Mammary epithelial cell (primary cell): ENCODE measurements at regions of chr20 and their contacts with region 1.

Region 1: GRCh38 chr20:25987073-25987927 is 290.6 kb upstream of the ZNF337 start:
- DNase-seq: peak; percentile 39
- H3K4me3 ChIP-seq: no peak overlapping the region
- H3K27ac ChIP-seq: no peak overlapping the region
- H3K4me1 ChIP-seq: no peaks in the 10 kb centered on the region
- H3K27me3 ChIP-seq: no peaks in the 10 kb centered on the region
- CTCF ChIP-seq: no peak

Region 2: DNA sequence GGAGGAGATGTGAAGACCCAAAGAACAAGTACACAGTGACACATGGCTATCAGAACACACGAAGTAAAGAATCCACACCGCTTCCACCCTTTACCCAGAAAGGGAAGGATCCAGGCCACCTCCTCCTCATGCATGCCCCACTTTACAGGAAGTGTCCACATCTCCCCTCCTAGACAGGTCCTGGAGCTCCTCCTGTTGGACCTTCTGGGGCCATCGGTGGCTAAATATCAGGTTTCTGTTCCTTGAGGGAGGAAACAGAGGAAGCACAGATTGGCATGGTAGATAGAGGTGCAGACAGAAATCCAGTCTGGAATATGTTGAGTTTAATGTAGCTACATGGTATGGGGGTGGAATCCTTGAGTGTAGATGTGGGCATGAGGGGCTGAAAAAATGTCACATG is 412.9 kb before region 1 on chr20:
- CTCF ChIA-PET with region 1: no interaction called
- dilution Hi-C with region 1: no loop called
- in situ Hi-C with region 1: no loop called
- intact Hi-C with region 1: no loop called
- DNase-seq: no peak
- H3K4me3 ChIP-seq: no peak overlapping the region
- H3K27ac ChIP-seq: no peak overlapping the region
- H3K4me1 ChIP-seq: no peaks in the 10 kb centered on the region
- H3K27me3 ChIP-seq: no peaks in the 10 kb centered on the region
- CTCF ChIP-seq: peak in 1 of 2 donors; percentile 17

Region 3: GRCh38 chr20:25632940-25633790 is 354.1 kb before region 1 on chr20:
- CTCF ChIA-PET with region 1: no interaction called
- dilution Hi-C with region 1: no loop called
- in situ Hi-C with region 1: no loop called
- intact Hi-C with region 1: no loop called
- DNase-seq: peak; percentile 82
- H3K4me3 ChIP-seq: no peak overlapping the region
- H3K27ac ChIP-seq: peak overlapping the region; percentile 18
- H3K4me1 ChIP-seq: peaks cover 12% of the 10 kb centered on the region
- H3K27me3 ChIP-seq: no peaks in the 10 kb centered on the region
- CTCF ChIP-seq: no peak

Region 4: GRCh38 chr20:26135325-26136110 is 148.2 kb after region 1 on chr20:
- CTCF ChIA-PET with region 1: no interaction called
- dilution Hi-C with region 1: no loop called
- in situ Hi-C with region 1: loop called in 1 of 2 experiments (anchors 25 kb)
- intact Hi-C with region 1: no loop called
- DNase-seq: no peak
- H3K4me3 ChIP-seq: no peak overlapping the region
- H3K27ac ChIP-seq: no peak overlapping the region
- H3K4me1 ChIP-seq: no peaks in the 10 kb centered on the region
- H3K27me3 ChIP-seq: no peaks in the 10 kb centered on the region
- CTCF ChIP-seq: no peak

Region 5: DNA sequence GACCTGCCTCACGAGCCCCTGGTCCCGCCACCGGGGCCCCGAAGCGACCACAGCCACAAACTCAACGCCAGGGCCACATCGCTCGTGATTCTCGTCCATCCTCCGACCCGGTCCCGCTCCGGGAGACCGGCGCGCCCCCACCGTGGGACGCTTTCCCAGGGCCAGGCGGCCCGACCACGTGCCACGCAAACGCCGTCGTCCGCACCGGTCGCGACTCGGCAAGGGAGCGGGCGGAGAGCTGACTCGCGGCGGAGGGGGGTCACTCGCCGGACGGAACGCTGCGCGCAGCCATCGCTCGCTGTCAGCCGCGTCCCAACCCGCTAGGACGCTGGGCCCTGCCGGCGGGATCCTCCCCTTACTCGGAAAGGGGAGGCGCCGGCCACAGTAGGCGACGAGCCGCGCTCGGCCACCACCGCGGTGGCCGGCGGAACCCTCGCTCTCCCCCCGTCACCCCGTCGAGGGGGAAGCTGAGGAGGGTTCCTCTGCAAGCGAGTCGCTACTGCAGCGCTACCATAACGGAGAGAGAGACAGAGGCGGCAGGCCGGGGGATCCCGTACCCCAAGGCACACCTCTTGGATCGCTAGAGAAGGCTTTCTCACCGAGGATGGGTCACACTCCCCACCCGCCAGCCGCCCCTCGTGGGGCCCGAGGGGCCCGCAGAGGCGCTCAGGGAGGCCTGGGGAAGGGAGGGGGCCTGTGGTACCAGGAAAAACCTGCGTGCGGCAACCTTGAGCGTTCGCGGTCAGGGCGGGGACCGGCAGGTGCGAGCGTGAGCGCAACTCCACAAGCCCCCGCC is 221.2 kb after region 1 on chr20:
- CTCF ChIA-PET with region 1: no interaction called
- dilution Hi-C with region 1: no loop called
- in situ Hi-C with region 1: no loop called
- intact Hi-C with region 1: no loop called
- DNase-seq: peak; percentile 2
- H3K4me3 ChIP-seq: no peak overlapping the region
- H3K27ac ChIP-seq: no peak overlapping the region
- H3K4me1 ChIP-seq: no peaks in the 10 kb centered on the region
- H3K27me3 ChIP-seq: peaks cover 15% of the 10 kb centered on the region
- CTCF ChIP-seq: no peak

Region 6: GRCh38 chr20:26315054-26315453 is 327.8 kb after region 1 on chr20:
- CTCF ChIA-PET with region 1: no interaction called
- dilution Hi-C with region 1: no loop called
- in situ Hi-C with region 1: no loop called
- intact Hi-C with region 1: no loop called
- DNase-seq: no peak
- H3K4me3 ChIP-seq: no peak overlapping the region
- H3K27ac ChIP-seq: no peak overlapping the region
- H3K4me1 ChIP-seq: no peaks in the 10 kb centered on the region
- H3K27me3 ChIP-seq: no peaks in the 10 kb centered on the region
- CTCF ChIP-seq: no peak